CD8-positive, alpha-beta T cell (primary cell): ENCODE measurements at regions of chr14 and their contacts with region 1.

Region 1: GRCh38 chr14:91323671-91324605 is 79.4 kb upstream of the GPR68 start:
- DNase-seq: peak; percentile 89 to 98 (median 94)
- ATAC-seq: peak; percentile 77
- H3K4me3 ChIP-seq: peak overlapping the region; percentile 18 to 33
- H3K4me3 Mint-ChIP-seq: peak overlapping the region; percentile 81
- H3K27ac ChIP-seq: peak overlapping the region; percentile 65 to 95
- H3K27ac Mint-ChIP-seq: peak overlapping the region; percentile 99
- H3K4me1 ChIP-seq: peaks cover 95% of the 10 kb centered on the region
- H3K4me1 Mint-ChIP-seq: peaks cover 84% of the 10 kb centered on the region
- H3K27me3 ChIP-seq: no peaks in the 10 kb centered on the region
- H3K27me3 Mint-ChIP-seq: no peaks in the 10 kb centered on the region
- CTCF ChIP-seq: peak; percentile 89

Region 2: GRCh38 chr14:90645842-90646443 is 678.0 kb before region 1 on chr14:
- CTCF ChIA-PET with region 1: no interaction called
- POLR2A ChIA-PET with region 1: no interaction called
- intact Hi-C with region 1: no loop called
- DNase-seq: no peak
- ATAC-seq: no peak
- H3K4me3 ChIP-seq: no peak overlapping the region
- H3K4me3 Mint-ChIP-seq: no peak overlapping the region
- H3K27ac ChIP-seq: no peak overlapping the region
- H3K27ac Mint-ChIP-seq: no peak overlapping the region
- H3K4me1 ChIP-seq: no peaks in the 10 kb centered on the region
- H3K4me1 Mint-ChIP-seq: no peaks in the 10 kb centered on the region
- H3K27me3 ChIP-seq: no peaks in the 10 kb centered on the region
- H3K27me3 Mint-ChIP-seq: no peaks in the 10 kb centered on the region
- CTCF ChIP-seq: no peak

Region 3: GRCh38 chr14:91341751-91342154 is 17.8 kb after region 1 on chr14:
- CTCF ChIA-PET with region 1: interaction called, 16 read pairs
- POLR2A ChIA-PET with region 1: interaction called, 4 read pairs
- intact Hi-C with region 1: no loop called
- DNase-seq: no peak
- ATAC-seq: no peak
- H3K4me3 ChIP-seq: no peak overlapping the region
- H3K4me3 Mint-ChIP-seq: no peak overlapping the region
- H3K27ac ChIP-seq: no peak overlapping the region
- H3K27ac Mint-ChIP-seq: no peak overlapping the region
- H3K4me1 ChIP-seq: peaks cover 23% of the 10 kb centered on the region
- H3K4me1 Mint-ChIP-seq: peaks cover 25% of the 10 kb centered on the region
- H3K27me3 ChIP-seq: no peaks in the 10 kb centered on the region
- H3K27me3 Mint-ChIP-seq: no peaks in the 10 kb centered on the region
- CTCF ChIP-seq: no peak

Region 4: GRCh38 chr14:91373591-91374254 is 49.8 kb after region 1 on chr14:
- CTCF ChIA-PET with region 1: interaction called, 34 read pairs
- POLR2A ChIA-PET with region 1: interaction called, 18 read pairs
- intact Hi-C with region 1: loop called (anchors 1 kb)
- DNase-seq: peak in 7 of 9 experiments; percentile 38 to 87 (median 65)
- ATAC-seq: peak; percentile 53
- H3K4me3 ChIP-seq: peak overlapping the region; percentile 45 to 58
- H3K4me3 Mint-ChIP-seq: peak overlapping the region; percentile 87
- H3K27ac ChIP-seq: peak overlapping the region; percentile 57 to 79
- H3K27ac Mint-ChIP-seq: peak overlapping the region; percentile 95
- H3K4me1 ChIP-seq: peaks cover 98% of the 10 kb centered on the region
- H3K4me1 Mint-ChIP-seq: peaks cover 99% of the 10 kb centered on the region
- H3K27me3 ChIP-seq: no peaks in the 10 kb centered on the region
- H3K27me3 Mint-ChIP-seq: no peaks in the 10 kb centered on the region
- CTCF ChIP-seq: no peak

Region 5: DNA sequence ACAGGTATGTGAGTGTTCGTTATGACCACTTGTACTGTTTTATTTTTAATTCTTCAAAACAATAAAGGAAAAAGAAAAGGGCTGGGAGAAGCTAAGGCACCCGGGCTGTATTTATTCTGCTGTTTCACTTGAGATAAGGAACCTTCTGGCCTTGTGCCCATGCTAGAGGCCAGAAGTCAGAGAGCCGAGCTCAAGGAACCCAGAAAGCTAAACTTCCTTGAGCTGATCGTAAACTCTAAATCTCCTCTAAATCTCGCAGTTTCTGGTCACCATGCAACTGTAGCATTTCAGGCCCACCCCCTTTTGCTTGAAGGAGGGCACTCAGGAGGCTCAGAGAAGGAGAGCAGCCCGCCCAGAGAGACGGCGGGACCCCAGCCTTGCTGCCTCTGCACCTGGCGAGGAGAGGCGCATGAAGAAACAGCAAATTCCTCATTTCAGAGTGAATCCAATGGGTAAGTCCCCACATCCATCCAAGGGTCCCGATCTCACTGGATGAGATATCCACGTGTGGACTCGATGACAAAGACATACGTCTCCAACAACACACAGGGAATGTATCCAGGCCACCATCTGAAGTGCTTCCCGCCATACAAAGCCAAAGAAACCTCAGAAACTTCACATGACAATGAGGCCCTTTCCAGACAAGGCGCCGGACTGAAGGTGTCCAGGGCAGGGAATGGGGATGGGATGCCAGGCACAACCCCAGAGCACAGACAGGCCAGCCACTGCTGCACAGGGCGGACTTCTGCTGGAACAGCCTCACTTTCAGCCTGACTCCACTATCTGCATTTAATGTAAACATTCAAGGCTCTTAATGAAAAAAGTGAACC is 79.0 kb after region 1 on chr14:
- CTCF ChIA-PET with region 1: interaction called, 59 read pairs
- POLR2A ChIA-PET with region 1: interaction called, 13 read pairs
- intact Hi-C with region 1: loop called (anchors 1 to 2 kb)
- DNase-seq: peak in 3 of 9 experiments; percentile 54 to 70 (median 60)
- ATAC-seq: peak; percentile 32
- H3K4me3 ChIP-seq: peak overlapping the region; percentile 39 to 43
- H3K4me3 Mint-ChIP-seq: peak overlapping the region; percentile 80
- H3K27ac ChIP-seq: peak overlapping the region; percentile 60 to 89
- H3K27ac Mint-ChIP-seq: peak overlapping the region; percentile 94
- H3K4me1 ChIP-seq: peaks cover 92% of the 10 kb centered on the region
- H3K4me1 Mint-ChIP-seq: peaks cover 88% of the 10 kb centered on the region
- H3K27me3 ChIP-seq: no peaks in the 10 kb centered on the region
- H3K27me3 Mint-ChIP-seq: no peaks in the 10 kb centered on the region
- CTCF ChIP-seq: no peak

Region 6: GRCh38 chr14:91545946-91546716 is 222.2 kb after region 1 on chr14:
- CTCF ChIA-PET with region 1: no interaction called
- POLR2A ChIA-PET with region 1: no interaction called
- intact Hi-C with region 1: no loop called
- DNase-seq: no peak
- ATAC-seq: no peak
- H3K4me3 ChIP-seq: no peak overlapping the region
- H3K4me3 Mint-ChIP-seq: no peak overlapping the region
- H3K27ac ChIP-seq: no peak overlapping the region
- H3K27ac Mint-ChIP-seq: no peak overlapping the region
- H3K4me1 ChIP-seq: no peaks in the 10 kb centered on the region
- H3K4me1 Mint-ChIP-seq: no peaks in the 10 kb centered on the region
- H3K27me3 ChIP-seq: peaks cover 0 to 3% of the 10 kb centered on the region in 2 experiments
- H3K27me3 Mint-ChIP-seq: peaks cover 2% of the 10 kb centered on the region
- CTCF ChIP-seq: no peak

Region 7: DNA sequence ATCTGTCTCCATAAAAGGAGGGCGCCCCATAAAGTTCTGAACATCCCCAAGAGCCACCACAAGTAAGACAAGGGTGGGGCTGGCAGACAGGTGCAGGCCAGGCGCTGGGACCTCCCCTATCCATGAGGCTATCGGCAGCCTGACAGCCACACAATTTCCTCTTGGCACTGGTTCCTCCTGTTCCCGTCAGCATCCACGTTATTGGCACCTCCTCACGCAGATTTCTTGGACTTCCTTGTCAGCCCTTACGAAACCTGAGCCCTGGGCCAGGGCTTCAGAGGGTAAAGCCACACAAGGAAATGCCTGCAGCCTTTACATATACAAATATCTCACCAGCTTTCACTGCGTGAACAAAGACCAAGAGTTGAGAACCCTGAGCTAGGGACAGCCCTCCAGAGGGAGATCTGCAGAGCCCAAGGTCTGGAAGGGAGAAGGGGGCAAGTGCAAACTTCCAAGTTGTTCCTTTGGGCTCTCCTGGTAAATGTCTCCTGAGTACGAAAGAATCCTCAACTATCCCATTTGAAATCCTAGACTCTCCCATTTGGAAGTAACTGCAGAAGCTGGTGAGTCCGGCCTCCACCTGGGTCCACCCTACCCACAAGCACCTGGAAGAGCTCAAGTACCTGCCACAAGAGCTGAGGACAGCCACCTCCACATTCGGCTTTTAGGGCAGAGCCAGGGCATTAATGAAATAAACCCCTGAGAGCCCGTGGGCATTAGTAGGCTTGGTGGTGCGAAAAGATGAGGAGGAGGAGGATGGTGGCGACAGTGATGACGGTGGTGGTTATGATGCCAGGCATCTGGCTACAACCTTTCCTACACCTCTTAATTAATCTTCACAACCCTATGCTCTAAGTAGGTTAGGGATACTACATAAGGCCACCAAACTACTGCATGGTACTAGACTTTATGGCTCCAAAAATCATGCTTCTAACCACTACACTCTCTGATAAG is 548.9 kb after region 1 on chr14:
- CTCF ChIA-PET with region 1: no interaction called
- POLR2A ChIA-PET with region 1: no interaction called
- intact Hi-C with region 1: loop called (anchors 10 kb)
- DNase-seq: peak in 7 of 9 experiments; percentile 51 to 87 (median 77)
- ATAC-seq: peak; percentile 37
- H3K4me3 ChIP-seq: peak overlapping the region; percentile 31 to 47
- H3K4me3 Mint-ChIP-seq: peak overlapping the region; percentile 71
- H3K27ac ChIP-seq: peak overlapping the region; percentile 83 to 86
- H3K27ac Mint-ChIP-seq: peak overlapping the region; percentile 99
- H3K4me1 ChIP-seq: peaks cover 92% of the 10 kb centered on the region
- H3K4me1 Mint-ChIP-seq: peaks cover 99% of the 10 kb centered on the region
- H3K27me3 ChIP-seq: no peaks in the 10 kb centered on the region
- H3K27me3 Mint-ChIP-seq: no peaks in the 10 kb centered on the region
- CTCF ChIP-seq: no peak